ENCODE measurements at regions of chr16 and their contacts with region 1.

Region 1: DNA sequence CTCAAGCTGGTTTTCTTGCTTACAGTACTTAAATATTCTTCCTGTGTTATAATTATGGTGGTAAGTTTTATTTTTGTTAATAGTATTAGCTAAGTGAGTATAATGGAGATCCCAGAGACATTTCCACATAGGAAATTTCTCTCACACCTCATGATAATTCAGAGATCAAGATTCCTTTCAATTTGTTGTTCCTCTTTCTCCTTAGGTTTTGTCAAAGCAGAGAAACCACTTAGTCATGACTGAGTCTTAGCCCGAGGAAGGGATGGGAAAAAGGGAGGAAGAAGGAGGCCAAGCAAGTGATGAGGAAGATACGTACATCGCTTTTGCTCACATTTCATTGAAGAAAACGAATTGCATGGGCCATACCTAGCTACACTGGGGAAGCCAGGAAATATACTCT is 18.4 kb downstream of the ESRP2 start:
- DNase-seq: no peak
- ATAC-seq: no peak
- H3K4me3 ChIP-seq: no peak overlapping the region
- H3K27ac ChIP-seq: no peak overlapping the region
- H3K4me1 ChIP-seq: no peaks in the 10 kb centered on the region
- H3K27me3 ChIP-seq: no peaks in the 10 kb centered on the region
- CTCF ChIP-seq: no peak

Region 2: GRCh38 chr16:67943619-67944504 is 273.6 kb before region 1 on chr16 and contains the start of gene LCAT:
- CTCF ChIA-PET with region 1: no interaction called
- POLR2A ChIA-PET with region 1: interaction called, 10 read pairs
- in situ Hi-C with region 1: no loop called
- intact Hi-C with region 1: no loop called
- DNase-seq: no peak
- ATAC-seq: peak; percentile 37; the same call in 1 of the 2 replicates
- H3K4me3 ChIP-seq: no peak within 1 kb of the TSS
- H3K27ac ChIP-seq: no peak within 1 kb of the TSS
- H3K4me1 ChIP-seq: no peaks in the 10 kb centered on the region; the same call in 1 of the 2 replicates
- H3K27me3 ChIP-seq: no peaks in the 10 kb centered on the region
- CTCF ChIP-seq: no peak
- total RNA-seq, gene LCAT: 14.0 TPM

Region 3: DNA sequence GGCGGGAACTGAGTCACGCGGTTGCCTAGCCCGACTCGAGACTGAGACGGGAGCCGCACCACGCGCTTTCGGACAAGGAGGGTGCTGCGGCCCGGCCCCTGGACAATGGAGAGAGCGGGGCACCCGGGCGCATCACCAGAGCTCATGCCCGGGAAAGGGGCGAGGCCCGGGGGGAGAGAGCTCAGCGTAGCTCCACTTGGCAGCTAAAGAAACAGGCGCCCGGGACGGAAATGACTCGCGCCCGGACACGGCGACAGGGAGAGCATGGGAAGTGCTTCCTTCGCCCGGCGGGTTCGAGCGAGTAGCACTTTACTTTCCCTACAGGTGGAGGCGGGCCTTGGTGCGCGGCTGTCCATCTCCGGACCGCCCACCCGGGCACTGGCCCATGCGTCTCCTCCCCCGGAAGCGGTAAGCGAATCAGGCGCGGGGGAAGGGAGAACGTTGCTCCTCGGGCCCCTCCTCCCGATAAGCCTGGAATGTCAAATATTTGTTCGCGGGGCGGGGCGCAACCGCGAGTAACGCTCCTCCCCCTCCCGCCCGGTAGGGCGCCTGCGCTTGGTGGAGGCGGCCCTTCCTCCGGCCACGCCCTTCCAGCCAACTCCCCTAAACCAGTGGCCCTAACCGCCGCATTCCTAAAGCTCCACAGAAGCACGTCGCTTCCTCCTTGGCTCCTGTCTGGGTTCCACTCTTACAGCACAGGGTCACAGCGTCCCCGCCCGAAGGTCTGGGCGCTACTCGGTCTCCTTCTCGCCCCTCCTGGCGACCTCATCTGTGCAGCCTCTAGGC is 19.9 kb after region 1 on chr16:
- CTCF ChIA-PET with region 1: no interaction called
- POLR2A ChIA-PET with region 1: no interaction called
- in situ Hi-C with region 1: no loop called
- intact Hi-C with region 1: no loop called
- DNase-seq: peak; percentile 87
- ATAC-seq: peak; percentile 85
- H3K4me3 ChIP-seq: peak overlapping the region; percentile 62 to 76
- H3K27ac ChIP-seq: peak overlapping the region; percentile 94
- H3K4me1 ChIP-seq: peaks cover 8% of the 10 kb centered on the region
- H3K27me3 ChIP-seq: no peaks in the 10 kb centered on the region
- CTCF ChIP-seq: no peak

Measured in Panc1 (cell line).